ENCODE measurements at regions of chr9 and their contacts with region 1.

Region 1: GRCh38 chr9:128881901-128882681 is at the starts of genes KYAT1 and LRRC8A:
- DNase-seq: peak; percentile 92
- ATAC-seq: peak; percentile 83
- H3K4me3 ChIP-seq: peak within 1 kb of the TSS; percentile 88 to 96 (median 94)
- H3K27ac ChIP-seq: peak within 1 kb of the TSS; percentile 93
- H3K4me1 ChIP-seq: peaks cover 57% of the 10 kb centered on the region
- H3K27me3 ChIP-seq: no peaks in the 10 kb centered on the region; a peak in 1 of 5 replicates
- CTCF ChIP-seq: peak; percentile 36
- EP300 ChIP-seq: no peak
- POLR2A ChIP-seq: peak; percentile 50 to 67
- RAD21 ChIP-seq: peak; percentile 57
- total RNA-seq, gene KYAT1: 5.6 and 9.2 TPM in 2 replicates
- total RNA-seq, gene LRRC8A: 10.0 and 16.1 TPM in 2 replicates

Region 2: DNA sequence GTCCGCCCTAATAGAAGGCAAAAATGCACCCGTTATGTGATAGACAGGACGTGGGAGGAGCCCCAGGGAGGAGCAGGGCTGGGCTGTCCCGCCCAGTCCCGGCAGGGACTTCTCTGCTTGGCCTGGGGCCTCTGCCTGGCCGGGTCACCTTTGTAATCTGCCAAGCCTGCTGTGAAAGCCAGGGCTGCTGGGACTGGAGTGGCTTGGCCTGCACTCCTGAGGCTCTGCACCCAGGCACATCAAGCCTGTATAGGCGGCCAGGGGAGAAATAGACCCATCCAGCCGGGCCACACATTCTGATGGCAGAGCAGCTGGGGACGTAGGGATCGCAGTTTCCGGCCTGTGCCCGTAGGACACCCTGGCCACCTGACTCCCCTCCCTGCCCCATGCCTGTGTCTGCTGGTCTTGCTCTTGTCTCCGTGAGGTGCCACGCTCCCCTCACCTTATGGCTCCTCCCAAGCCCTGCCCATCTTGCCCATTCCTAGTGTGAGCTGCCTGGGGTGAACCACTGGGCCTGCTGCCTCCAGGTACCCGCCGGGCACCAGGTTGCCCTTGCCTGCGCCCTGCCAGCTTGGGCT is 253.5 kb before region 1 on chr9:
- CTCF ChIA-PET with region 1: no interaction called
- POLR2A ChIA-PET with region 1: no interaction called
- in situ Hi-C with region 1: no loop called
- intact Hi-C with region 1: no loop called
- DNase-seq: peak; percentile 23
- ATAC-seq: peak; percentile 74
- H3K4me3 ChIP-seq: no peak overlapping the region
- H3K27ac ChIP-seq: no peak overlapping the region
- H3K4me1 ChIP-seq: peaks cover 11% of the 10 kb centered on the region
- H3K27me3 ChIP-seq: no peaks in the 10 kb centered on the region
- CTCF ChIP-seq: no peak
- EP300 ChIP-seq: no peak
- POLR2A ChIP-seq: no peak
- RAD21 ChIP-seq: no peak

Region 3: GRCh38 chr9:128921881-128922763 is 40.0 kb after region 1 on chr9:
- CTCF ChIA-PET with region 1: interaction called, 6 read pairs
- POLR2A ChIA-PET with region 1: interaction called, 25 read pairs
- in situ Hi-C with region 1: loop called (anchors 5 kb)
- intact Hi-C with region 1: no loop called
- DNase-seq: peak; percentile 62
- ATAC-seq: peak; percentile 72
- H3K4me3 ChIP-seq: peak overlapping the region; percentile 75 to 94 (median 78)
- H3K27ac ChIP-seq: peak overlapping the region; percentile 79
- H3K4me1 ChIP-seq: peaks cover 62% of the 10 kb centered on the region
- H3K27me3 ChIP-seq: no peaks in the 10 kb centered on the region
- CTCF ChIP-seq: 0 out of 2 replicates have a peak, but pooled peaks have one; percentile 8
- EP300 ChIP-seq: no peak
- POLR2A ChIP-seq: peak; percentile 29 to 67; a peak in 3 of 4 replicates
- RAD21 ChIP-seq: 0 out of 2 replicates have a peak, but pooled peaks have one; percentile 15

Region 4: GRCh38 chr9:128927731-128928411 is 45.8 kb after region 1 on chr9:
- CTCF ChIA-PET with region 1: interaction called, 6 read pairs
- POLR2A ChIA-PET with region 1: interaction called, 7 read pairs
- in situ Hi-C with region 1: loop called (anchors 5 kb)
- intact Hi-C with region 1: loop called (anchors 1 kb)
- DNase-seq: no peak
- ATAC-seq: peak; percentile 89
- H3K4me3 ChIP-seq: no peak overlapping the region
- H3K27ac ChIP-seq: no peak overlapping the region
- H3K4me1 ChIP-seq: peaks cover 17% of the 10 kb centered on the region
- H3K27me3 ChIP-seq: no peaks in the 10 kb centered on the region
- CTCF ChIP-seq: peak; percentile 96
- EP300 ChIP-seq: no peak
- POLR2A ChIP-seq: no peak
- RAD21 ChIP-seq: peak; percentile 92

Region 5: GRCh38 chr9:129036241-129036922 is 154.3 kb after region 1 on chr9 and contains the start of gene MIGA2:
- CTCF ChIA-PET with region 1: no interaction called
- POLR2A ChIA-PET with region 1: no interaction called
- in situ Hi-C with region 1: no loop called
- intact Hi-C with region 1: no loop called
- DNase-seq: peak; percentile 98
- ATAC-seq: peak; percentile 86
- H3K4me3 ChIP-seq: peak within 1 kb of the TSS; percentile 73 to 97 (median 96)
- H3K27ac ChIP-seq: peak within 1 kb of the TSS; percentile 77
- H3K4me1 ChIP-seq: peaks cover 27% of the 10 kb centered on the region
- H3K27me3 ChIP-seq: no peaks in the 10 kb centered on the region; a peak in 1 of 5 replicates
- CTCF ChIP-seq: no peak
- EP300 ChIP-seq: no peak
- POLR2A ChIP-seq: peak; percentile 71 to 74
- RAD21 ChIP-seq: peak; percentile 56; the same call in 1 of the 2 replicates
- total RNA-seq, gene MIGA2: 8.9 and 17.1 TPM in 2 replicates

Measured in HepG2 (cell line).